ENCODE measurements at regions of chr11 and their contacts with region 1.

Region 1: GRCh38 chr11:44565211-44565952 is at the start of gene CD82:
- DNase-seq: peak; percentile 93 to 96 (median 95)
- H3K4me3 ChIP-seq: peak within 1 kb of the TSS; percentile 59 to 97
- H3K4me3 Mint-ChIP-seq: peak within 1 kb of the TSS; percentile 85 to 94 (median 92)
- H3K27ac ChIP-seq: peak within 1 kb of the TSS; percentile 82
- H3K27ac Mint-ChIP-seq: peak within 1 kb of the TSS; percentile 93 to 96 (median 95)
- H3K4me1 ChIP-seq: peaks cover 47% of the 10 kb centered on the region
- H3K4me1 Mint-ChIP-seq: peaks cover 40 to 90% (median 56%) of the 10 kb centered on the region in 4 donors
- H3K27me3 ChIP-seq: no peaks in the 10 kb centered on the region
- H3K27me3 Mint-ChIP-seq: no peaks in the 10 kb centered on the region
- total RNA-seq, gene CD82: 130 to 133 TPM

Region 2: GRCh38 chr11:44464741-44465140 is 100.6 kb before region 1 on chr11:
- CTCF ChIA-PET with region 1: no interaction called
- POLR2A ChIA-PET with region 1: no interaction called
- intact Hi-C with region 1: no loop called
- DNase-seq: no peak
- H3K4me3 ChIP-seq: no peak overlapping the region
- H3K4me3 Mint-ChIP-seq: no peak overlapping the region
- H3K27ac ChIP-seq: no peak overlapping the region
- H3K27ac Mint-ChIP-seq: no peak overlapping the region
- H3K4me1 ChIP-seq: no peaks in the 10 kb centered on the region
- H3K4me1 Mint-ChIP-seq: no peaks in the 10 kb centered on the region
- H3K27me3 ChIP-seq: no peaks in the 10 kb centered on the region
- H3K27me3 Mint-ChIP-seq: peaks cover 4 to 10% of the 10 kb centered on the region in 2 donors

Region 3: GRCh38 chr11:44596525-44597276 is 31.3 kb after region 1 on chr11:
- CTCF ChIA-PET with region 1: interaction called, 26 read pairs
- POLR2A ChIA-PET with region 1: interaction called, 287 read pairs
- intact Hi-C with region 1: loop called (anchors 1 kb)
- DNase-seq: peak; percentile 82 to 92 (median 84)
- H3K4me3 ChIP-seq: peak overlapping the region; percentile 29 to 36
- H3K4me3 Mint-ChIP-seq: peak overlapping the region; percentile 81 to 90 (median 85)
- H3K27ac ChIP-seq: peak overlapping the region; percentile 83
- H3K27ac Mint-ChIP-seq: peak overlapping the region; percentile 94 to 99 (median 98)
- H3K4me1 ChIP-seq: peaks cover 96% of the 10 kb centered on the region
- H3K4me1 Mint-ChIP-seq: peaks cover 47 to 95% (median 76%) of the 10 kb centered on the region in 4 donors
- H3K27me3 ChIP-seq: no peaks in the 10 kb centered on the region
- H3K27me3 Mint-ChIP-seq: no peaks in the 10 kb centered on the region

Region 4: DNA sequence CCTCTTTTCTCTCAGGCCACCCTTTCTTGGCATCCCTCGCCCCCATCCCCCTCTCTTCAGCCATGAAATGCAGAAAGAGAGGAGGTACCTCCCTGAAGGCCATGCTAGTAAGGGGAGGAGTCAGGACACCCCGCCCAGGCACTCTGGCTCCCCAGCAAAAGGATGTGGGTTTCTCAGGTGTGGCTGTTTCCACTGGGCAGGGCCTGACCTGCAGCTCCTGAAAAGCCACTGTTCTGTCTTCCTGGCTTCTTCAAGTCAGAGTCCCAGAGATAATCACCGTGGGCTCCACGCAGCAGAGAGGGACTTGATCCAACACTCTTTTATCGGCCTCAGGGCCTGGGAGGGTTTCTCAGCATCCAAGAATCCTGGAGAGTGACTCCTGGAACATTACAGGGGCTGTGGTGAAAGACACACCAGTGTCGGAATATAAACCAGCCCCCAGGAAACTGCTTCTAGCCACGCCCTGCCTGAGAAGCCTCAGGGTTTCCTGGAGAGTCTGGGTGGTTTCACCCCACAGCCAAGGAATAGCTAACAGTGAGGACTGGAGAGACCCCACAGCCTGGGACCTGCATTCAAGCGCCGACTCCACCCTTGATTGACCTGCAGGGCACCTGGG is 115.7 kb after region 1 on chr11:
- CTCF ChIA-PET with region 1: no interaction called
- POLR2A ChIA-PET with region 1: interaction called, 5 read pairs
- intact Hi-C with region 1: loop called (anchors 1 kb)
- DNase-seq: peak; percentile 66 to 78 (median 69)
- H3K4me3 ChIP-seq: peak overlapping the region; percentile 44 to 67
- H3K4me3 Mint-ChIP-seq: peak overlapping the region; percentile 70 to 91 (median 88)
- H3K27ac ChIP-seq: peak overlapping the region; percentile 48
- H3K27ac Mint-ChIP-seq: peak overlapping the region; percentile 49 to 95 (median 84)
- H3K4me1 ChIP-seq: peaks cover 52% of the 10 kb centered on the region
- H3K4me1 Mint-ChIP-seq: peaks cover 43 to 75% (median 54%) of the 10 kb centered on the region in 4 donors
- H3K27me3 ChIP-seq: no peaks in the 10 kb centered on the region
- H3K27me3 Mint-ChIP-seq: no peaks in the 10 kb centered on the region

Region 5: DNA sequence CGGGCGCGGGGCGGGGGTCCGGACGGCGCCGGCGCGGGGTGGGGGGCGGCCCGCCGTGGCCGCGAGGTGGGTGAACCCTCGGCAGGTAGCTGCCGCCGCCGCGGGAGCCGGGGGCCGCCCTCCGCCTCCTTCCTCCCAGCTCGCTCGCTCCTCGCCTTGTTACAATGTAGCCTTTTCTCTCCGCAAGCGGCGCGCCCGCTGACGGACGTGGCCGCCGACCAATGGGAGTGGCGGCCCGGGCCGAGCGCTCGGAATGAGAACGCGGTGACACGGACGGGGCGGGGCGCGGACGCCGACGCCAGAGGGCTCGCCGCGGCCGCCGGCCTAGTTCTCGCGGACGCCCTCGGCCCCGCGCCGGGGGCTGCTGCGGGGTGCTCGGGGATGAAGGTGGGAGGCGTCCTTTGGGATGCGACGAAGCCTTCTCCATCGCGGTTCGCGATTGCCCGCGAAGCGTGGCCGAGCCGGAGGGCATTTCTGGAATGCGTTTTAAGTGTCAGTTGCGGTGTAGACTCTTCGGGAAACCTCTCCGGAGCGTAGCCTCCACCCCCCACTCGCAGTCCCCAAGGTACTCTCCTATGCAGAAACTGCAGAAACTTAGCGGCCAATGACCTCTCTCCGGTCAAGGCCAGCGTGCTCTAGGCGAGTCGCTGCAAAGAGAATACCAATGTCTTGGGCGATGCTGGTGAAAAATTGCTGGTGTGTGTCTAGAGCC is 581.8 kb after region 1 on chr11:
- CTCF ChIA-PET with region 1: no interaction called
- POLR2A ChIA-PET with region 1: no interaction called
- intact Hi-C with region 1: loop called (anchors 10 kb)
- DNase-seq: peak; percentile 92 to 93 (median 92)
- H3K4me3 ChIP-seq: peak overlapping the region; percentile 69 to 72
- H3K4me3 Mint-ChIP-seq: peak overlapping the region; percentile 90 to 94 (median 92)
- H3K27ac ChIP-seq: peak overlapping the region; percentile 68
- H3K27ac Mint-ChIP-seq: peak overlapping the region; percentile 67 to 95 (median 93)
- H3K4me1 ChIP-seq: peaks cover 21% of the 10 kb centered on the region
- H3K4me1 Mint-ChIP-seq: peaks cover 26 to 47% (median 36%) of the 10 kb centered on the region in 4 donors
- H3K27me3 ChIP-seq: peaks cover 9% of the 10 kb centered on the region
- H3K27me3 Mint-ChIP-seq: no peaks in the 10 kb centered on the region

Measured in CD4-positive, alpha-beta memory T cell (primary cell).